Left colon (tissue), 2 donors: ENCODE measurements at regions of chr11 and their contacts with region 1.

Region 1: GRCh38 chr11:81644239-81644840 is 1089.3 kb downstream of the FAM181B start:
- DNase-seq: peak in 1 of 2 donors; percentile 5
- ATAC-seq: peak; percentile 53

Region 2: DNA sequence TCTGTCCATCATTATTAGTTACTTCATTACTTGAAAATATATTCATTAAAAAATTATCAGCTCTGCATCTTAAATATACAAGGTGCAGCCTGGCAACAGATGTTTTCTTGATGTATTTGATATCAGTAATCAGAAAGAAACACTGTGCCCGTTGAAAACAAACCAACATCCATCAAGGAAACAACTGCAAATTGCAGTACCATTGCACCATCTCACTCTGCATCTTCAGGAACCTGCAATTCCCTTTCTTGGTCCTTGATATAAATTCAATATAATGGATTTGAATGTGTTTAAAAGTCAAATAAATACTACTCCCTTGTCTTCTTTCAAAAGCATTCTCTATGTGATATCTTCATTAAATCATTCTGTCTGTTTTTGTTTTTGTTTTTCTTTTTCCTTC is 41.8 kb before region 1 on chr11:
- intact Hi-C with region 1: no loop called
- DNase-seq: no peak
- ATAC-seq: no peak

Region 3: GRCh38 chr11:81687057-81687456 is 42.7 kb after region 1 on chr11:
- intact Hi-C with region 1: no loop called
- DNase-seq: no peak
- ATAC-seq: no peak

Region 4: GRCh38 chr11:82698576-82699352 is 1054.4 kb after region 1 on chr11:
- intact Hi-C with region 1: loop called in 1 of 2 experiments (anchors 10 kb)
- DNase-seq: no peak
- ATAC-seq: no peak